Activated CD4-positive, alpha-beta T cell treated with anti-CD3 and anti-CD28 coated beads for 36 hours (primary cell): ENCODE measurements at regions of chr17 and their contacts with region 1.

Region 1: GRCh38 chr17:43760254-43760852 is 1.8 kb upstream of the SOST start:
- DNase-seq: peak; percentile 96
- ATAC-seq: peak; percentile 97
- H3K4me3 Mint-ChIP-seq: no peak overlapping the region
- H3K27ac Mint-ChIP-seq: no peak overlapping the region
- H3K4me1 Mint-ChIP-seq: no peaks in the 10 kb centered on the region
- H3K27me3 Mint-ChIP-seq: peaks cover 19% of the 10 kb centered on the region

Region 2: GRCh38 chr17:43134774-43135453 is 625.4 kb before region 1 on chr17:
- CTCF ChIA-PET with region 1: no interaction called
- POLR2A ChIA-PET with region 1: no interaction called
- intact Hi-C with region 1: no loop called
- DNase-seq: no peak
- ATAC-seq: no peak
- H3K4me3 Mint-ChIP-seq: no peak overlapping the region
- H3K27ac Mint-ChIP-seq: no peak overlapping the region
- H3K4me1 Mint-ChIP-seq: peaks cover 5% of the 10 kb centered on the region
- H3K27me3 Mint-ChIP-seq: no peaks in the 10 kb centered on the region

Region 3: DNA sequence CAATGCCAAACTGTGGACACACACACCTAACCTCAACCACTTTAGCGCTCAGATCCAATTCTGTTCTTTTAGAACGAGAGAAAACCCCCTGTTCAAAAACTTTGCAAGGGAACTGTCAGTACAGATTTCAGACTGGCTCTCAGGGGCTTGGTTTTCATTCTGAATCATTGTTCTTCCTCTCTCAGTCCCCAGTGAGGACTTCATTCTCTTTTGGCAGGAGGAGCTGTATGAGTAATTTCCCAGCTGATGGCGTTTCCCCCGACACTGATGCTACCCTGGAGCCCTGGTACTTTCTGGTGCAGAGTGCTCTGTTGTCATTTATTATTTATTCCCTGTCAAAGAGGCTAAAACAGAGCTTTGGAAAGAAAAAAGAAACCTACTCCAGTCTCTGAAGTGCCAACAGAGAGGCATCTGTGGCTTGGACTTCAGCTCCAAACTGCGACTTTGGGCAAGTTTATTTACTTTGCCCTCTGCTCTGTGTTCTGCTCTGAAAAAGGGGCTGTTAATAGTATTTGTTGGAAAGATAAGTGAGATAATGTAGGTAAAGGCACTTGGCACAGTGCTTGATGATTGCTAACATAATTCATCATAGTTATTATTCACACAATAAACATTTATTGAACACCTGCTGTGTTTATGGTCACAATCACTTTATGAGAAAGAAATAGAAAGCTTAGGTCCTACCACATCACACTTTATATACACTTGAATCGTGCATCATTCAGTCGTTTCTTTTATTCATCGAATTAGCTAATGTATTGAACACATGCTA is 242.6 kb before region 1 on chr17:
- CTCF ChIA-PET with region 1: no interaction called
- POLR2A ChIA-PET with region 1: no interaction called
- intact Hi-C with region 1: no loop called
- DNase-seq: peak; percentile 13
- ATAC-seq: peak; percentile 71
- H3K4me3 Mint-ChIP-seq: no peak overlapping the region
- H3K27ac Mint-ChIP-seq: no peak overlapping the region
- H3K4me1 Mint-ChIP-seq: peaks cover 8% of the 10 kb centered on the region
- H3K27me3 Mint-ChIP-seq: no peaks in the 10 kb centered on the region

Region 4: DNA sequence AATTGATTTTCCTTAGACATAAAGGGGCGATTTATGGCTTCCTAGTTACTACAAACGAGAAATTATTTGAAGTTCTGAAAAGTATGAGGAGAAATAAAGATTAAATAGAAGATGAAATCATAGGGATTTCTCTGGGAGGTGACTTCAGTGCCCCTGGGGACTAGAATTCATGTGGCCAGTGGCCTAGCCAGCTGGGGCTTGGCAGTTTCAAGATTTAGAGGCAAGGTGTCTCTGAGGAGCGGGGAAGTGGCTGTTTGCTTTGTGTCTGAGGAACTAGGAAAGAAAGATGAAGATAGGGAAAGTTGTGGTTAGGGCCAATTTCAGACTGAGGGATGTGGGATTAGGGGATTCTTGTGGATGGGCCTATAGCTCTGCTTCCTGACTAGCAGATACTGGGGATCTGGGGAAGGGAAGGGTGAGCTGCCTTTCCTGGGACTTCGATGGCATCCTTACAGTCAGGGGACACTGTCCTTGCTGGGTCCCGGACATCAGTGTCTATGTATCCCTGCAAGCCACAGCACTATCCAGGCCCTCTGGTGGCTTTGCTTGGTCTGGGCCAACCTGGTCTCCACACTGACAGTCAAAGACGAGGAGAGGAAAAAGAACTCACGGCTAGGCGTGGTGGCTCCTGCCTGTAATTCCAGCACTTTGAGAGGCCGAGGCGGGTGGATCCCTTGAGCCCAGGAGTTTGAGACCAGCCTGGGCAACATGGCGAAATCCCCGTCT is 76.3 kb before region 1 on chr17:
- CTCF ChIA-PET with region 1: interaction called, 11 read pairs
- POLR2A ChIA-PET with region 1: interaction called, 5 read pairs
- intact Hi-C with region 1: no loop called
- DNase-seq: no peak
- ATAC-seq: no peak
- H3K4me3 Mint-ChIP-seq: no peak overlapping the region
- H3K27ac Mint-ChIP-seq: no peak overlapping the region
- H3K4me1 Mint-ChIP-seq: no peaks in the 10 kb centered on the region
- H3K27me3 Mint-ChIP-seq: peaks cover 4% of the 10 kb centered on the region

Region 5: GRCh38 chr17:43694077-43694870 is 66.1 kb before region 1 on chr17:
- CTCF ChIA-PET with region 1: interaction called, 473 read pairs
- POLR2A ChIA-PET with region 1: no interaction called
- intact Hi-C with region 1: loop called (anchors 1 kb)
- DNase-seq: peak; percentile 86
- ATAC-seq: peak; percentile 99
- H3K4me3 Mint-ChIP-seq: no peak overlapping the region
- H3K27ac Mint-ChIP-seq: no peak overlapping the region
- H3K4me1 Mint-ChIP-seq: no peaks in the 10 kb centered on the region
- H3K27me3 Mint-ChIP-seq: peaks cover 3% of the 10 kb centered on the region

Region 6: DNA sequence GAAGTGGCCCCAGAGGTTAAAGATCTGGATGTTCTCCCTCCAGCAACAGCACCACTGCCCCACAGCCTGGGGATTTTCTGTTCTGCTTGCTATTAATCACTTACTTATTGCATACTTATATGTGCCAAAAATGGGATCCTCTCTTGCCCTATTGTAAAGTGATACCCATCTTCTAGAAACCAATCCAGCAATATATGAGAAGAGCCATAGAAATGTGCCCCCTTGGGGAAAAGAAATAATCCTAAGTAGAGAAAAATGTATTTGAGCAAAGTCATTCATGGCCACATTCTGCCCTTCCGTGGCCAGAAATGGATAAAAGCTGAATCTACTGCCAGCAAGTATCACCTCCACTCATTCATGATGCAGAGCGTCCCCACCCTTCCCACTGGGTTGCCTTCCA is 22.6 kb before region 1 on chr17:
- CTCF ChIA-PET with region 1: interaction called, 10 read pairs
- POLR2A ChIA-PET with region 1: no interaction called
- intact Hi-C with region 1: no loop called
- DNase-seq: no peak
- ATAC-seq: no peak
- H3K4me3 Mint-ChIP-seq: no peak overlapping the region
- H3K27ac Mint-ChIP-seq: no peak overlapping the region
- H3K4me1 Mint-ChIP-seq: no peaks in the 10 kb centered on the region
- H3K27me3 Mint-ChIP-seq: peaks cover 17% of the 10 kb centered on the region